ENCODE measurements at regions of chr1 and their contacts with region 1.

Region 1: GRCh38 chr1:45803301-45803780 is at the start of gene MAST2:
- DNase-seq: peak; percentile 94
- H3K4me3 ChIP-seq: peak within 1 kb of the TSS; percentile 46 to 60 (median 58)
- H3K27ac ChIP-seq: peak within 1 kb of the TSS; percentile 78 to 93 (median 88)
- H3K4me1 ChIP-seq: peaks cover 0 to 29% (median 20%) of the 10 kb centered on the region in 4 donors
- H3K27me3 ChIP-seq: no peaks in the 10 kb centered on the region
- CTCF ChIP-seq: no peak
- EP300 ChIP-seq: no peak
- POLR2A ChIP-seq: peak in 1 of 2 donors; percentile 39
- total RNA-seq, gene MAST2: 19.3 to 54.0 (median 30.3) TPM

Region 2: DNA sequence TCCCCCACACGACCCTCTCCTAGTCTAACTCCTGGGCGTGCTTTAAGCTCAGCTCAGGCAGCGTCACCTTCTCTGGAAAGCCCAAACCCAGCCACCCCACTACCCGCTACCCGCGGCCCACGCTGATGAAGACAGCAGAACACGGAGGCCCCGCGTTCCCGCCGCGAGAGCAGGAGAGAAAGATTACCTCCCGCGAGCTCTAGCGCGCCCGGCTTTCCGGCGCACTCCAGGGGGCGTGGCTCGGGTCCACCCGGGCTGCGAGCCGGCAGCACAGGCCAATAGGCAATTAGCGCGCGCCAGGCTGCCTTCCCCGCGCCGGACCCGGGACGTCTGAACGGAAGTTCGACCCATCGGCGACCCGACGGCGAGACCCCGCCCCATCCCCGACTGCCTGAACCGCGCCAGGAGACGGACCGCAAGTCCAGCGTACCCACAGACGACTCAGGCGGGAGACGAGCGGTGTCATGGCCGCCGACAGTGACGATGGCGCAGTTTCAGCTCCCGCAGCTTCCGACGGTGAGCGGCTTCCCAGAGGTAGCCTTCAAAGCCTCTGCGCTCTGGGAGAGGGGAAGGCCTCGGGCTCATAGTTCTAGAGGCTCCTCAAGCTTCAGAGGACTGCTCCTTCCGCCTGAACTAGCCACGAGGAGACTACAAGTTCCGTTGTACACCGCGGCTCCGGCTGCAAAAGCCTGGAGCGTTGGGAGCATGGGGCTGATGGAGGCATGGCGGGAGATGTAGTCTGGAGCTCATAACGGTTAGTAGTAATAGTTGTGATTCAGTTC is 463.4 kb before region 1 on chr1 and contains the starts of genes MUTYH and TOE1:
- intact Hi-C with region 1: loop called (anchors 5 kb)
- DNase-seq: peak; percentile 96
- H3K4me3 ChIP-seq: peak within 1 kb of the TSS; percentile 67 to 88 (median 76)
- H3K27ac ChIP-seq: peak within 1 kb of the TSS; percentile 92 to 98 (median 96)
- H3K4me1 ChIP-seq: peaks cover 0 to 30% (median 28%) of the 10 kb centered on the region in 4 donors
- H3K27me3 ChIP-seq: no peaks in the 10 kb centered on the region
- CTCF ChIP-seq: no peak
- EP300 ChIP-seq: no peak
- POLR2A ChIP-seq: peak; percentile 58 to 60
- total RNA-seq, gene MUTYH: 15.7 to 22.8 (median 19.2) TPM
- total RNA-seq, gene TOE1: 7.1 to 10.5 (median 7.3) TPM

Region 3: DNA sequence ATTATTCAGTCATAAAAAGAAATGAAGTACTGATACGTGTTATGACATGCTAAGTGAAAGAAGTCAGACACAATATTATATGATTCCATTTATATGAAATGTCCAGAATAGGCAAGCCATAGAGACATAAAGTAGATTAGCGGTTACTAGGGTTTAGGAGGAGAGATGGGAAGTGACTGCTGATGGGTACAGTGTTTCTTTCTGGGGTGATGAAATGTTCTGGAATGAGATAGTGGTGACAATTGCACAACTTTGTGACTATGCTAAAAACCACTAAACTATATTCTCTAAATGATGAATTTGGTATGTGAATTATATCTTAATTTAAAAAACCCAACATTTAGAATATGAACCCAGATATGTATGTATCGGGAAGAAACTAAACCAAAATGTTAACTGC is 80.5 kb before region 1 on chr1:
- intact Hi-C with region 1: no loop called
- DNase-seq: no peak
- H3K4me3 ChIP-seq: no peak overlapping the region
- H3K27ac ChIP-seq: no peak overlapping the region
- H3K4me1 ChIP-seq: peaks cover 0 to 4% (median 0%) of the 10 kb centered on the region in 4 donors
- H3K27me3 ChIP-seq: no peaks in the 10 kb centered on the region
- CTCF ChIP-seq: no peak
- EP300 ChIP-seq: no peak
- POLR2A ChIP-seq: no peak

Region 4: DNA sequence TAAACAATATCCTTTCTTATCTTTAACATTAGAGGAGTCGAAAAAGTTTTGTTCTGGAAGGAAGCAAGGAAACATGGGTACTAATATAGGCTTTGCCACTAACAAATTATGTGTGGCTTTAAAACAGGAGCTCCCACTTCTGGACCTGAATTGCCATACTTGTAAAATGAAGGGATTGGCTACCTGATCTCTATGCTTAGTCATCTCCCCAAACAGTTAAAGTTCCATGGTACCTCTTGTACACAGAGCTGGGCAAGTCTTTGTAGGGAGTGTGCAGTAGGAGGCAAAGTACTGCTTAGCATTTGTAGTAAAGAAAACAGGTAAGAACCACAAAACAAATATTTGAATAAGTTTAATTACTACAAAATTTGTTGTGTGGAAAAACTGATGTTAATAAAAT is 81.4 kb after region 1 on chr1:
- intact Hi-C with region 1: loop called (anchors 5 kb)
- DNase-seq: no peak
- H3K4me3 ChIP-seq: no peak overlapping the region
- H3K27ac ChIP-seq: no peak overlapping the region
- H3K4me1 ChIP-seq: peaks cover 0 to 19% (median 5%) of the 10 kb centered on the region in 4 donors
- H3K27me3 ChIP-seq: no peaks in the 10 kb centered on the region
- CTCF ChIP-seq: no peak
- EP300 ChIP-seq: no peak
- POLR2A ChIP-seq: no peak

Measured in sigmoid colon (tissue), 7 donors.